Right lobe of liver (tissue), 6 donors: ENCODE measurements at regions of chr3 and their contacts with region 1.

Region 1: GRCh38 chr3:14672588-14672987 is 2.4 kb upstream of the C3orf20 start:
- DNase-seq: no peak
- ATAC-seq: no peak
- H3K4me3 ChIP-seq: no peak overlapping the region
- H3K27ac ChIP-seq: no peak overlapping the region
- H3K4me1 ChIP-seq: peaks cover 0 to 2% (median under 1%) of the 10 kb centered on the region in 4 donors
- H3K27me3 ChIP-seq: no peaks in the 10 kb centered on the region
- CTCF ChIP-seq: no peak
- POLR2A ChIP-seq: no peak

Region 2: DNA sequence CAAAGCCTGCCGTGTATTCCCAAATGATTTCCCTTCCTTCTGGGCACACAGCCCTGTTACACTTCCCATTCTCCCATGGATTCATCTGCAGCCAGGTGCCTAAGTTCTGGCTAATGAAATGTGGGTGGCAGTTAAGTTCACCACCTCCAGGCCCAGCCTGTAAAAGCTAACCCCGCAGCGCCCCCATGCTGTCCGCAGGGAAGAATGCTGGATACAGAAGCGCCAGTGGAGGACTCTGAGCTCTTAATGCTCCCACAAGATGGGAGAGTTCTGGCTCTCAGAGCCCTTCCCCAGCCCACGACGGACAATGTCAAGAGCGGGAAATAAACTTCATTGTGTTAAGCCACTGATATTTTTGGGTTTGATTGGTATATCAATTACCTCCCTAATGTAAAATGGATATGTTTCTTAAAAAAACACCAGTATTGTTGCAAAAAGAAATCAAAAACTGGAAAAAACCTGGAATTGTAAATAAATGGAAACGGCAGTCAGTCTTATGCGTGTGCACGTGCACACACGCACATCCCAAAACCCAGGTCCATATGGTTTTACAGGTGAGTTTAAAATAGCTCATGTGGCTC is 108.4 kb after region 1 on chr3:
- intact Hi-C with region 1: loop called (anchors 5 to 10 kb)
- DNase-seq: peak; percentile 79 to 89 (median 83)
- ATAC-seq: peak; percentile 99 to 100 (median 100)
- H3K4me3 ChIP-seq: no peak overlapping the region
- H3K27ac ChIP-seq: no peak overlapping the region
- H3K4me1 ChIP-seq: no peaks in the 10 kb centered on the region
- H3K27me3 ChIP-seq: no peaks in the 10 kb centered on the region
- CTCF ChIP-seq: peak; percentile 66 to 84 (median 78)
- POLR2A ChIP-seq: no peak